Prostate gland (tissue), 2 donors: ENCODE measurements at regions of chr1 and their contacts with region 1.

Region 1: GRCh38 chr1:12276225-12276624 is 46.4 kb downstream of the VPS13D start:
- DNase-seq: no peak
- H3K4me3 ChIP-seq: no peak overlapping the region
- H3K27ac ChIP-seq: no peak overlapping the region
- H3K4me1 ChIP-seq: no peaks in the 10 kb centered on the region
- H3K27me3 ChIP-seq: no peaks in the 10 kb centered on the region
- CTCF ChIP-seq: peak in 2 of 4 experiments; percentile 49 to 51
- POLR2A ChIP-seq: no peak

Region 2: GRCh38 chr1:12204140-12204539 is 72.1 kb before region 1 on chr1:
- intact Hi-C with region 1: no loop called
- DNase-seq: no peak
- H3K4me3 ChIP-seq: no peak overlapping the region
- H3K27ac ChIP-seq: no peak overlapping the region
- H3K4me1 ChIP-seq: no peaks in the 10 kb centered on the region
- H3K27me3 ChIP-seq: no peaks in the 10 kb centered on the region
- CTCF ChIP-seq: no peak
- POLR2A ChIP-seq: no peak

Region 3: GRCh38 chr1:12229835-12230548 is 46.2 kb before region 1 on chr1 and contains the start of gene VPS13D:
- intact Hi-C with region 1: loop called (anchors 2 kb)
- DNase-seq: peak; percentile 79
- H3K4me3 ChIP-seq: peak within 1 kb of the TSS; percentile 93 to 99
- H3K27ac ChIP-seq: peak within 1 kb of the TSS; percentile 83 to 93
- H3K4me1 ChIP-seq: peaks cover 5% of the 10 kb centered on the region
- H3K27me3 ChIP-seq: no peaks in the 10 kb centered on the region
- CTCF ChIP-seq: peak; percentile 81 to 99 (median 94)
- POLR2A ChIP-seq: peak; percentile 69
- total RNA-seq, gene VPS13D: 60.7 to 80.8 TPM

Region 4: DNA sequence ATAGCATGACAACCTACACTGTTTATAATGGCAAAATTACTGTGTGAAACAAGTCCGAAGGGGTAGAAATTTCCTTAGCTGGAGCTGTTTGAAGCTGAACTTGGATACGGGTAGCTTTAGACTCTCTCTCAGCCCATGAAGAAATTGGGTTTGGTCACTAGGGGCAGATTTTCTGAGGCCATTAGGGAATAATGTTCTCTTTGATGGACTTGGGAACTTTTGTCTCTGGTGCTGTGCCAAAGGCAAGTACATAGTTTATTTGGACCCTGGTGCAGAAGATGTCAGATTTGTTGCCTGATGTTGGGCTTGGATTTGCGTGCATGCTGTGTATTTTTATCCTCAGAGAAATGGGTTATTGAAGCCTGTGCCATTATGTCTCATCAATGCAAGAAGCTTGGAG is 63.2 kb after region 1 on chr1:
- intact Hi-C with region 1: loop called (anchors 2 kb)
- DNase-seq: no peak
- H3K4me3 ChIP-seq: no peak overlapping the region
- H3K27ac ChIP-seq: no peak overlapping the region
- H3K4me1 ChIP-seq: no peaks in the 10 kb centered on the region
- H3K27me3 ChIP-seq: no peaks in the 10 kb centered on the region
- CTCF ChIP-seq: peak in 1 of 4 experiments; percentile 4
- POLR2A ChIP-seq: no peak